Sciatic nerve (tissue), 2 donors: ENCODE measurements at regions of chr13 and their contacts with region 1.

Region 1: DNA sequence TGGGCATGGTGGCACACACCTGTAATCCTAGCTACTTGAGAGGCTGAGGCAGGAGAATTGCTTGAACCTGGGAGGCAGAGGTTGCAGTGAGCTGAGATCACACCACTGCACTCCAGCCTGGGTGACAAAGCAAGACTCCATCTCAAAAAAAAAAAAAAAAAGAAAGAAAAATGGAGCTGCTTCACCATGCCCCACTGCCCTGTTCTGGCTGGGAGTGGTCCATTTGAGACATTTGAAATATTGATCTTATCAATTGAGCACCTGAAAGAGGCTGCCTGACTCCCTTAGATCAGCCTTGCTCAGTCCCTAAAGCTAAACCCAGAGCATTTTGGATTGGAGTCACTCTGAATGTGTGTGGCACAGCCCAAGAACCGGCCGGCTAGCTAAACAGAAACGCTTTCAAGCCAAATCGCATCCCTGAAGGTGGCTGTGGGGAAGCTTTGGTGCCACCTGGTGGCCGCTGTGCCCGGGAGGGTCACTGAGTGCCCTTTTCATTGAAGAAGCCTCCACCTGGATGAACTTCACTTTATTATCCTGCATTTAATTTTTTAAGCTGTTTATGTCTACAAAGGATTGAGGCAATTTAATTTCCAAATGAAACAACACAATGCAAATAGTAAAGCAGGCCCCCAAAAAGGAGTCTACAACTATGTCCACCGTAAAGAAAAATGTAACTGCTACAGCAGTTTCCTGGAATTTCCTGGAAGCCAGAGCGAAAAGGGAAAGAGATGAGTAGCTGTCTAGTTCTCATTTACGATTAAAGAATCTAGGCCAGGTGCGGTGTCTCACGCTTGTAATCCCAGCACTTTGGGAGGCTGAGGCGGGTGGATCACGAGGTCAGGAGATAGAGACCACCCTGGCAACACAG is 53.1 kb upstream of the SERPINE3 start:
- DNase-seq: peak; percentile 92
- ATAC-seq: peak; percentile 92

Region 2: DNA sequence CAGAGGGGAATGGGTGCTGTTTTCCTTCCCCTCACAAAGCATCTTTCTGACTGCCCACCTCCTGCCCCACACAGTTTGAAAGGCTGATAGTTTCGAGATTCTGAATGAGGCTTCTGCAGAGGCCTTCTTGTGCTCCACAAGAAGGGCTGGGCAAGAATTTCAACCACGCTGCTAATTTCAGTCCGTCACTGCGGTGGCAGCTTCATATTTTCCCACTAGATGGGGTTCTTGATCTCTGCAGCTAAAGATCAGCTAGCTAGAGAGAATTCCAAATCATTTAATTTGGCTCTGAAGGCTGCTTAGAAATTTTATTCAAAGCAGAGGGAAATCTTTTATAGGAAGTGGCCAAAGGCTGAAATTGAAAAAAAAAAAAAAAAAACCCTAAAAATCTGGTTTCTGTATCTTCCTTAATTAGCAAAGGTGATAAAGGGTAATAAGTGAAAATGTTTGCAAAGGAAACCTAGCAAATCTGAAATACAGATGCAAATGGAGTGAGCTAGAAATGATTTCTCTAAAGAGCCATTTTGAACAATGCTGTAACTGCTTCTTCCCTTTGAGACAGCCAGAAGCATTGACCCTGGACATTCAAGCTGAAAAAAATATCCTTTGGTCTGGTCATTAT is 137.3 kb before region 1 on chr13:
- intact Hi-C with region 1: loop called (anchors 2 kb)
- DNase-seq: peak; percentile 68
- ATAC-seq: peak; percentile 84

Region 3: GRCh38 chr13:51162701-51163100 is 123.7 kb before region 1 on chr13:
- intact Hi-C with region 1: loop called (anchors 5 kb)
- DNase-seq: no peak
- ATAC-seq: no peak

Region 4: GRCh38 chr13:51222037-51222685 is 64.2 kb before region 1 on chr13 and contains the start of gene FAM124A:
- intact Hi-C with region 1: loop called (anchors 1 kb)
- DNase-seq: peak; percentile 70
- ATAC-seq: peak; percentile 83
- total RNA-seq, gene FAM124A: 19.2 TPM

Region 5: GRCh38 chr13:51599444-51600176 is 313.2 kb after region 1 on chr13:
- intact Hi-C with region 1: no loop called
- DNase-seq: no peak
- ATAC-seq: no peak